ENCODE measurements at regions of chr3 and their contacts with region 1.

Region 1: GRCh38 chr3:98182196-98182595 is 15.7 kb downstream of the OR5H15 start:
- DNase-seq: no peak
- ATAC-seq: no peak
- H3K4me3 ChIP-seq: no peak overlapping the region
- H3K27ac ChIP-seq: no peak overlapping the region
- H3K4me1 ChIP-seq: no peaks in the 10 kb centered on the region
- H3K27me3 ChIP-seq: no peaks in the 10 kb centered on the region
- CTCF ChIP-seq: no peak
- EP300 ChIP-seq: no peak
- POLR2A ChIP-seq: no peak
- RAD21 ChIP-seq: no peak

Region 2: GRCh38 chr3:98140531-98140930 is 41.7 kb before region 1 on chr3:
- CTCF ChIA-PET with region 1: no interaction called
- POLR2A ChIA-PET with region 1: no interaction called
- in situ Hi-C with region 1: no loop called
- intact Hi-C with region 1: loop called (anchors 2 kb)
- DNase-seq: no peak
- ATAC-seq: no peak
- H3K4me3 ChIP-seq: no peak overlapping the region
- H3K27ac ChIP-seq: no peak overlapping the region
- H3K4me1 ChIP-seq: no peaks in the 10 kb centered on the region
- H3K27me3 ChIP-seq: no peaks in the 10 kb centered on the region
- CTCF ChIP-seq: no peak
- EP300 ChIP-seq: no peak
- POLR2A ChIP-seq: no peak
- RAD21 ChIP-seq: no peak

Region 3: DNA sequence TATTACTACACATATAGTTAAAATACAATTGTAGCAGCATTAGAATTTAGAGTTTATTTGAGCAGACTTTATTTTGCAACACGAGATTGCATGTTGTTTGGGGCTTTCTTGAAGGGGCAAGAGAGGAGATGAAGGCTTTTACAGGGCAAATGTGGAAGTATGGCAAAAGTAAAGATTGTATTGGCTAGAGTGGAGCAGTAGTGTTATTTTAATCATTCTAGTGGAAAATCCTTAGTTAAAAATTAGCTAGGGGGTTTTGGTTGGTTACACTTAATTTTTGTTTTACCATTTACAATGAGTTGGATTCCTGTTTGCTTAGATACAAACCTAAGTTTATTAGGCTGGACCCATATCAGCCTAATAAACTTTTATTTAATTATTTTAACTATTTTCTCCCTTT is 11.1 kb before region 1 on chr3:
- CTCF ChIA-PET with region 1: no interaction called
- POLR2A ChIA-PET with region 1: no interaction called
- in situ Hi-C with region 1: no loop called
- intact Hi-C with region 1: no loop called
- DNase-seq: no peak
- ATAC-seq: no peak
- H3K4me3 ChIP-seq: no peak overlapping the region
- H3K27ac ChIP-seq: no peak overlapping the region
- H3K4me1 ChIP-seq: no peaks in the 10 kb centered on the region
- H3K27me3 ChIP-seq: no peaks in the 10 kb centered on the region; a peak in 1 of 5 replicates
- CTCF ChIP-seq: no peak
- EP300 ChIP-seq: no peak
- POLR2A ChIP-seq: no peak
- RAD21 ChIP-seq: no peak

Measured in HepG2 (cell line).